Gastrocnemius medialis (tissue), 4 donors: ENCODE measurements at regions of chr2 and their contacts with region 1.

Region 1: GRCh38 chr2:27890146-27890923 is at the starts of genes BABAM2 and RBKS:
- DNase-seq: peak; percentile 74 to 82
- ATAC-seq: peak; percentile 87 to 92
- H3K4me3 ChIP-seq: peak within 1 kb of the TSS; percentile 74 to 88 (median 83)
- H3K27ac ChIP-seq: peak within 1 kb of the TSS; percentile 94 to 99 (median 96)
- H3K4me1 ChIP-seq: peaks cover 22 to 35% of the 10 kb centered on the region in 2 donors
- H3K27me3 ChIP-seq: no peaks in the 10 kb centered on the region
- CTCF ChIP-seq: peak in 1 of 5 experiments; percentile 21
- POLR2A ChIP-seq: peak; percentile 95 to 96
- total RNA-seq, gene BABAM2: 57.2 to 72.2 (median 67.5) TPM
- total RNA-seq, gene RBKS: 0.41 to 5.4 (median 3.0) TPM

Region 2: GRCh38 chr2:27566628-27567027 is 323.7 kb before region 1 on chr2:
- in situ Hi-C with region 1: no loop called
- intact Hi-C with region 1: no loop called
- DNase-seq: no peak
- ATAC-seq: no peak
- H3K4me3 ChIP-seq: no peak overlapping the region
- H3K27ac ChIP-seq: no peak overlapping the region
- H3K4me1 ChIP-seq: no peaks in the 10 kb centered on the region
- H3K27me3 ChIP-seq: no peaks in the 10 kb centered on the region
- CTCF ChIP-seq: no peak
- POLR2A ChIP-seq: no peak

Region 3: DNA sequence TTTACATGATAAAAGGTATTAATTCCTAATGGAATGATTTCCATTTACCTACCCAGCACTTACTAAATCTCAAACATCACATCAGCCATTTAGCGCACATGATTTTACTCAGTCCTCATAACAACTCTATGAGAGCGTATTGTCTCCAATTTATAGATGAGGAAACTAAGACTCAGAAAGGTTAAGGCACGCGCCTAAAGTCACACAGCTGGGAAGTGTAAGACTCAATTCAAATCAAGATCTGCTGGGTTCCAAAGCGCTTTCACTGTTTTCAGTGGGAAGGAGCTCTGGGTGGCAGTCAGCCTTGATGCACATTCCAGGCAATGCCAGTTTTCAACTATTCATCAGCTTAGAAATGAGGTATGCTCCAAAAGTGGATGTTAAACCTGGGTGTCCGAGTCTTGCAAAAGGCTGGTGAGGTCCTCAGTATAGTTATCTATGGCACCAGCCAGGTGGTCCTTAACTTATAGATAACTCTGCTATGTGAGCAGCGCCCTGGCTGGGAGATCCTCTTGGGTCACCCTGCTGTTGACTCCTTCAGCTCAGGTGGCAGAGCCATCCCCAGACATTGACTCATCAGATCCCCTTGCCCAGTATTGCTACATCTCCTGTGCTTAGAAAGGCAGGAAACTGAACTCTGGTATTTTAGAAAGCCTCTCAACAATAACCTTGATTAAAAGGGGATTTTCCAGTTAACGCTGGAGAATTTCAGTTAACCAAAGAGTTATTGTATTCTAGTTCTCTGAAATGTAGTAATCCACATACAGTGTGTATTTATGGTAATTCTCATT is 179.5 kb before region 1 on chr2:
- in situ Hi-C with region 1: no loop called
- intact Hi-C with region 1: loop called (anchors 5 kb)
- DNase-seq: peak; percentile 37 to 52
- ATAC-seq: no peak
- H3K4me3 ChIP-seq: no peak overlapping the region
- H3K27ac ChIP-seq: peak overlapping the region in 2 of 4 donors; percentile 4 to 21
- H3K4me1 ChIP-seq: peaks cover 26 to 28% of the 10 kb centered on the region in 2 donors
- H3K27me3 ChIP-seq: no peaks in the 10 kb centered on the region
- CTCF ChIP-seq: no peak
- POLR2A ChIP-seq: no peak

Region 4: GRCh38 chr2:27754138-27754588 is 136.2 kb before region 1 on chr2:
- in situ Hi-C with region 1: no loop called
- intact Hi-C with region 1: no loop called
- DNase-seq: peak; percentile 63 to 76
- ATAC-seq: peak; percentile 84 to 92
- H3K4me3 ChIP-seq: no peak overlapping the region
- H3K27ac ChIP-seq: no peak overlapping the region
- H3K4me1 ChIP-seq: peaks cover 7 to 9% of the 10 kb centered on the region in 2 donors
- H3K27me3 ChIP-seq: no peaks in the 10 kb centered on the region
- CTCF ChIP-seq: peak; percentile 82 to 91 (median 86)
- POLR2A ChIP-seq: no peak

Region 5: GRCh38 chr2:27854229-27854862 is 36.0 kb before region 1 on chr2:
- in situ Hi-C with region 1: no loop called
- intact Hi-C with region 1: loop called (anchors 5 kb)
- DNase-seq: no peak
- ATAC-seq: peak in 1 of 2 donors; percentile 52
- H3K4me3 ChIP-seq: no peak overlapping the region
- H3K27ac ChIP-seq: no peak overlapping the region
- H3K4me1 ChIP-seq: peaks cover 19 to 28% of the 10 kb centered on the region in 2 donors
- H3K27me3 ChIP-seq: no peaks in the 10 kb centered on the region
- CTCF ChIP-seq: no peak
- POLR2A ChIP-seq: no peak

Region 6: GRCh38 chr2:27966483-27966882 is 76.1 kb after region 1 on chr2:
- in situ Hi-C with region 1: no loop called
- intact Hi-C with region 1: no loop called
- DNase-seq: peak in 1 of 2 donors; percentile 19
- ATAC-seq: peak in 1 of 2 donors; percentile 67
- H3K4me3 ChIP-seq: no peak overlapping the region
- H3K27ac ChIP-seq: peak overlapping the region; percentile 2 to 52 (median 22)
- H3K4me1 ChIP-seq: peaks cover 15 to 33% of the 10 kb centered on the region in 2 donors
- H3K27me3 ChIP-seq: no peaks in the 10 kb centered on the region
- CTCF ChIP-seq: no peak
- POLR2A ChIP-seq: no peak

Region 7: GRCh38 chr2:28009732-28010131 is 119.4 kb after region 1 on chr2:
- in situ Hi-C with region 1: no loop called
- intact Hi-C with region 1: no loop called
- DNase-seq: peak; percentile 66
- ATAC-seq: peak; percentile 93 to 97
- H3K4me3 ChIP-seq: no peak overlapping the region
- H3K27ac ChIP-seq: peak overlapping the region; percentile 63 to 82 (median 72)
- H3K4me1 ChIP-seq: peaks cover 21 to 40% of the 10 kb centered on the region in 2 donors
- H3K27me3 ChIP-seq: no peaks in the 10 kb centered on the region
- CTCF ChIP-seq: no peak
- POLR2A ChIP-seq: no peak

Region 8: GRCh38 chr2:28164280-28164801 is 274.0 kb after region 1 on chr2:
- in situ Hi-C with region 1: no loop called
- intact Hi-C with region 1: loop called (anchors 5 kb)
- DNase-seq: peak; percentile 68 to 88
- ATAC-seq: peak; percentile 81 to 86
- H3K4me3 ChIP-seq: peak overlapping the region in 3 of 4 donors; percentile 17 to 25 (median 24)
- H3K27ac ChIP-seq: peak overlapping the region; percentile 89 to 96 (median 92)
- H3K4me1 ChIP-seq: peaks cover 36 to 61% of the 10 kb centered on the region in 2 donors
- H3K27me3 ChIP-seq: no peaks in the 10 kb centered on the region
- CTCF ChIP-seq: no peak
- POLR2A ChIP-seq: peak in 1 of 2 donors; percentile 50

Region 9: GRCh38 chr2:28398101-28398834 is 507.9 kb after region 1 on chr2:
- in situ Hi-C with region 1: no loop called
- intact Hi-C with region 1: loop called (anchors 2 kb)
- DNase-seq: peak; percentile 75 to 79
- ATAC-seq: peak; percentile 35 to 45
- H3K4me3 ChIP-seq: peak overlapping the region; percentile 76 to 97 (median 88)
- H3K27ac ChIP-seq: peak overlapping the region; percentile 98 to 100 (median 99)
- H3K4me1 ChIP-seq: peaks cover 59% of the 10 kb centered on the region in 2 donors
- H3K27me3 ChIP-seq: no peaks in the 10 kb centered on the region
- CTCF ChIP-seq: no peak
- POLR2A ChIP-seq: peak; percentile 58 to 73